ENCODE measurements at regions of chr7 and their contacts with region 1.

Region 1: GRCh38 chr7:101244375-101245146 is at the start of gene FIS1:
- DNase-seq: no peak
- H3K4me3 ChIP-seq: peak within 1 kb of the TSS; percentile 94
- CTCF ChIP-seq: peak; percentile 94

Region 2: GRCh38 chr7:100167921-100168323 is 1076.6 kb before region 1 on chr7:
- CTCF ChIA-PET with region 1: no interaction called
- POLR2A ChIA-PET with region 1: no interaction called
- DNase-seq: no peak
- H3K4me3 ChIP-seq: peak overlapping the region; percentile 52
- CTCF ChIP-seq: no peak

Region 3: DNA sequence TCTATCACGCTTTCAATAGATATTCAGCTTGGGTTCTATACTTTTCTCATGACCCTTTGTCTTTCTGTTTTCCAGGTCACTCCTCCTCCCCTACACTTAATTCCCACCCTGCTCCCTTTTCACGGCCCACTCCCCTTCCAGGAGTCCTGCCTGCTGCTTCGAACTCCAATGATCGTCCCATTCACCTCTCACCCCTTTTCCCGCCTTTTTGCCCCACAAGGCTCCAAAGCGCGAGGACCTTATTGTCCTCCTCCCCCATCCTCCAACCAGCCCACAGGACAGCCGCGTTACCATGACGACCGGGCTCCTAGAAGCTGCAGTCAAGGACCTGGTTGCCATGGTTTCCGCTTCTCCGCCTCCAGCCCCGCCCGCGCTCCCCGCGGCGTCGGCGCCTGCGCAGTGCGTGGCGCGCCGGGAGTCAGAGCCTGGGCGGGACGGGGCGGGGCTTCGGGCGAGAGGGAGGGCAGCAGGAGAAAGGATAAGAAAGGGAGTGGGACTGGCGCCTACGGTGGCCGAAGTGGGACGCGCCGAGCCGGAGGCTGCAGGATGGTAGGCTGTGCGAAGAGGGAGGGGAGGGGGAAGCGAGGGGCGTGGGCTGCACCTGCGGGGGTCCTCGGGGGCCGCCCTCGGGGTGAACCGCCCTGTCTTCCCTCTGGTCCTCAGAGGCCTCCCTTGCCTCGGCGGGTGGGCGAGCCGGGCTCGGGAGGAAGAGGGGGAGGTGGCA is 90.4 kb before region 1 on chr7 and contains the start of gene AP1S1:
- CTCF ChIA-PET with region 1: interaction called, 13 read pairs
- POLR2A ChIA-PET with region 1: no interaction called
- DNase-seq: no peak
- H3K4me3 ChIP-seq: peak within 1 kb of the TSS; percentile 83
- CTCF ChIP-seq: no peak

Region 4: GRCh38 chr7:101217388-101218235 is 26.9 kb before region 1 on chr7 and contains the starts of genes PLOD3 and ZNHIT1:
- CTCF ChIA-PET with region 1: interaction called, 86 read pairs
- POLR2A ChIA-PET with region 1: interaction called, 14 read pairs
- DNase-seq: peak; percentile 85
- H3K4me3 ChIP-seq: peak within 1 kb of the TSS; percentile 91
- CTCF ChIP-seq: peak; percentile 13

Region 5: DNA sequence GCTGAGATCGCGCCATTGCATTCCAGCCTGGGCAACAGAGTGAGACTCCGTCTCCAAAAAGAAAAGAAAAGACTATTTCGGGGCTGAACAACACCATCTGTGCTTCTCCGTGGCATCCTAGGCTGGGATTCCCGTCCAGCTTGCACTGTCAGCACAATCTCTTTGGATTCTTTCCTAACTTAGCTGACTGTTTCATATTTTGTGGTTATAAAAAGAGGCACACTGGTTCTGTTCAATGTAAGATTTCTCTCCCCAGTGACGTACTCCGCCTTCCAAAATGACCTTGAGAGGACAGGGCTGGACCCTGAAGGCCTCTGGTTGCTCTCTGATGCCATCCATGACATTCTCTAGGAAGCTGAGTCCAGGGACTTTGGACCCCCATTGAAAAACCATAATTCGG is 17.8 kb before region 1 on chr7:
- CTCF ChIA-PET with region 1: interaction called, 86 read pairs
- POLR2A ChIA-PET with region 1: no interaction called
- DNase-seq: no peak
- H3K4me3 ChIP-seq: no peak overlapping the region
- CTCF ChIP-seq: no peak

Region 6: GRCh38 chr7:101258243-101258731 is 13.7 kb after region 1 on chr7:
- CTCF ChIA-PET with region 1: interaction called, 22 read pairs
- POLR2A ChIA-PET with region 1: interaction called, 3 read pairs
- DNase-seq: no peak
- H3K4me3 ChIP-seq: no peak overlapping the region
- CTCF ChIP-seq: no peak

Region 7: GRCh38 chr7:101321491-101322401 is 77.2 kb after region 1 on chr7 and contains the start of gene IFT22:
- CTCF ChIA-PET with region 1: no interaction called
- POLR2A ChIA-PET with region 1: no interaction called
- DNase-seq: peak; percentile 37
- H3K4me3 ChIP-seq: peak within 1 kb of the TSS; percentile 81
- CTCF ChIP-seq: peak; percentile 54

Region 8: GRCh38 chr7:101342892-101343291 is 98.3 kb after region 1 on chr7:
- CTCF ChIA-PET with region 1: no interaction called
- POLR2A ChIA-PET with region 1: no interaction called
- DNase-seq: no peak
- H3K4me3 ChIP-seq: no peak overlapping the region
- CTCF ChIP-seq: no peak

Region 9: GRCh38 chr7:102050864-102051460 is 806.4 kb after region 1 on chr7:
- CTCF ChIA-PET with region 1: no interaction called
- POLR2A ChIA-PET with region 1: no interaction called
- DNase-seq: no peak
- H3K4me3 ChIP-seq: no peak overlapping the region
- CTCF ChIP-seq: no peak

Measured in AG04449 (cell line).